Activated T-helper 1 cell treated with anti-CD3 and anti-CD28 coated beads, Interleukin-12 subunit alpha, Interleukin-12 subunit beta, Interleukin-2, Interleukin-4 antibody, amounts not matched to agents 30 ng/mL and 10 ng/mL and 1 ng/mL, durations not matched to agents 14 hours and 24 hours and 36 hours (primary cell): ENCODE measurements at regions of chr10 and their contacts with region 1.

Region 1: DNA sequence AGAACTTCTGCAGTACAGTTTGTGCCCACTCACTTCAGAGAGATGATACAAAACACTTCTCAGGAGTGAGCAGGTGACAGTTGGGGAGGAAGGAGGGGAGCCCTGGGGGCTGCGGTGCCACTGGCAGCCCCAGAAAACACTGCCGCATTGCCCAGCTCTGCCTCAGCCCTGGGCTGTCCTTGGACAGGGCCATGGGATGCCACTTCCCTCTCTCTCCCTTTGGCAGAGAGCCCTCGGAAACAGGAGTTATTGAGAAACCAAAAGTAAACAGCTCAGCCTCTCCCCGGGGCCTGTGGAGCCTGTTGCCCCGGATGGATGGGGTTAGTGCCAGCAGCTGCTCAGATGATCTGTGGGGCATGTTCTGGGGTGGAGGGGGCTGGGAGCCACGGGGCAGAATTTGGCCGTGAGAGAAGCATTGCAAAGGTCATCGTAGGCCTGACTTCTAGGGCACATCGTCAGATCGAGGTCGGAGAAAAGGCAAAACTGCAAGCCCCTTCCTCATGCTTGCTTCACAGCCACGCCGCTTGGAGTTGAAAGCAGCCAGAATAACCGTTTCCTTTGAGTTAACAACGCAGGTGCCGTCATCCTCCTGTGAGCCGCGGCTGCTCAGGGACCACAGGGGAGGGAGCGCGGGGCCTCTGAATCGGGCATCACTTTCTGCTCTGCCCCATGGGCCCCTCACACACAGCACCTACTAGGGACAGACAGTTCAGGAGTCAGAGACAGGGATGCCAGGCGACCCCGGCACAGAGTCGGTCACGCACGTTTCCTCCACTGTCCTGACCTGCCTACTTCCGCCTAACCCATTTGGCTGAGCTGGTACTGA is 256.4 kb downstream of the CAMK1D start:
- DNase-seq: peak; percentile 59
- H3K4me3 Mint-ChIP-seq: peak overlapping the region; percentile 83
- H3K27ac Mint-ChIP-seq: peak overlapping the region; percentile 97
- H3K4me1 Mint-ChIP-seq: peaks cover 43% of the 10 kb centered on the region
- H3K27me3 Mint-ChIP-seq: no peaks in the 10 kb centered on the region

Region 2: GRCh38 chr10:12638103-12638502 is 32.3 kb after region 1 on chr10:
- intact Hi-C with region 1: loop called (anchors 1 kb)
- DNase-seq: peak; percentile 49
- H3K4me3 Mint-ChIP-seq: peak overlapping the region; percentile 24
- H3K27ac Mint-ChIP-seq: peak overlapping the region; percentile 64
- H3K4me1 Mint-ChIP-seq: peaks cover 61% of the 10 kb centered on the region
- H3K27me3 Mint-ChIP-seq: peaks cover 2% of the 10 kb centered on the region